Left ventricle myocardium inferior (tissue), 1 donor: ENCODE measurements at regions of chr14 and their contacts with region 1.

Region 1: GRCh38 chr14:100645192-100645990 is 58.2 kb upstream of the BEGAIN start:
- DNase-seq: peak; percentile 71
- H3K4me3 ChIP-seq: no peak overlapping the region
- H3K27ac ChIP-seq: no peak overlapping the region
- H3K4me1 ChIP-seq: no peaks in the 10 kb centered on the region
- H3K27me3 ChIP-seq: peaks cover 37% of the 10 kb centered on the region
- CTCF ChIP-seq: peak; percentile 76

Region 2: GRCh38 chr14:100256339-100256895 is 389.0 kb before region 1 on chr14:
- intact Hi-C with region 1: no loop called
- DNase-seq: no peak
- H3K4me3 ChIP-seq: no peak overlapping the region
- H3K27ac ChIP-seq: no peak overlapping the region
- H3K4me1 ChIP-seq: peaks cover 84% of the 10 kb centered on the region
- H3K27me3 ChIP-seq: no peaks in the 10 kb centered on the region
- CTCF ChIP-seq: no peak

Region 3: GRCh38 chr14:100384819-100385813 is 260.3 kb before region 1 on chr14:
- intact Hi-C with region 1: loop called (anchors 5 kb)
- DNase-seq: no peak
- H3K4me3 ChIP-seq: no peak overlapping the region
- H3K27ac ChIP-seq: no peak overlapping the region
- H3K4me1 ChIP-seq: peaks cover 28% of the 10 kb centered on the region
- H3K27me3 ChIP-seq: no peaks in the 10 kb centered on the region
- CTCF ChIP-seq: peak; percentile 60

Region 4: GRCh38 chr14:100440187-100440631 is 205.2 kb before region 1 on chr14:
- intact Hi-C with region 1: loop called (anchors 10 kb)
- DNase-seq: peak; percentile 64
- H3K4me3 ChIP-seq: peak overlapping the region; percentile 33
- H3K27ac ChIP-seq: peak overlapping the region; percentile 68
- H3K4me1 ChIP-seq: peaks cover 33% of the 10 kb centered on the region
- H3K27me3 ChIP-seq: no peaks in the 10 kb centered on the region
- CTCF ChIP-seq: peak; percentile 78

Region 5: GRCh38 chr14:100747021-100747586 is 101.7 kb after region 1 on chr14:
- intact Hi-C with region 1: no loop called
- DNase-seq: no peak
- H3K4me3 ChIP-seq: no peak overlapping the region
- H3K27ac ChIP-seq: no peak overlapping the region
- H3K4me1 ChIP-seq: no peaks in the 10 kb centered on the region
- H3K27me3 ChIP-seq: peaks cover 22% of the 10 kb centered on the region
- CTCF ChIP-seq: no peak